Mammary epithelial cell (primary cell): ENCODE measurements at regions of chr15 and their contacts with region 1.

Region 1: DNA sequence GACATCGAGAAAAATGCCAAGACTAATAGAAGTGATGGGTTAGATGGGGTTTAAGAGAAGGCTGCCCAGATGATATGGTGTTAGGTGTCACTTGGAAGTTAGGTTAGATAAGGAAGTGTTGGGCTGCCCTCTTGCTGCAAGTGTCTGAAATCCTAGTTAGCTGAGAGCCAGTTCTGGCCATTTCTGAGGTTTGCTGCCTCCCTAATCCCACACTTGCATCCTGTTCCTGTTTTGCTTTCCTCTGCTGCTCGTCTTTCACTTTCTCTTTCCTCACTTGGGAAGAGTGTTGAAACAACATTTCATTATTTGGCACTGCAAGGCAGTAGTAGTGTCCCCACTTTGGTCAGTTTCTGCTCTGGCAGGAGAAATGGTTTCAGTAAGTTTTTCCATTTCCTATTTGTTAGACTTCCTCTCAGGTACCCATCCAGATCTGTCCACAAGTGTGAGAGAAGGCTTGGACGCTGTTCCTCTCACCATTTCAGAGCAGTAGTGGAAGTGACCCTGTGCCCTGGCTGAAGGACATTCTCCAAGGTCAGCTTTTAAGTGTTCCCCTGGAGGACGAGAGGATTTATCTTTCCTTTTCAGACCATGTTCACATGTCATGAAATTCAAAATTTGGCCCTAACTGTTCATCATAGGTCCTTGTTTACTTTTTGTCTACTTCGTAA is 93.3 kb downstream of the ADAMTSL3 start:
- DNase-seq: peak; percentile 65
- H3K4me3 ChIP-seq: peak overlapping the region in 1 of 3 experiments; percentile 18
- H3K27ac ChIP-seq: no peak overlapping the region
- H3K4me1 ChIP-seq: no peaks in the 10 kb centered on the region
- H3K27me3 ChIP-seq: no peaks in the 10 kb centered on the region
- CTCF ChIP-seq: peak; percentile 51 to 68

Region 2: GRCh38 chr15:83248151-83249029 is 498.8 kb before region 1 on chr15:
- CTCF ChIA-PET with region 1: no interaction called
- dilution Hi-C with region 1: no loop called
- in situ Hi-C with region 1: no loop called
- intact Hi-C with region 1: loop called (anchors 10 kb)
- DNase-seq: peak; percentile 62
- H3K4me3 ChIP-seq: no peak overlapping the region
- H3K27ac ChIP-seq: no peak overlapping the region
- H3K4me1 ChIP-seq: no peaks in the 10 kb centered on the region
- H3K27me3 ChIP-seq: no peaks in the 10 kb centered on the region
- CTCF ChIP-seq: peak; percentile 81 to 87

Region 3: DNA sequence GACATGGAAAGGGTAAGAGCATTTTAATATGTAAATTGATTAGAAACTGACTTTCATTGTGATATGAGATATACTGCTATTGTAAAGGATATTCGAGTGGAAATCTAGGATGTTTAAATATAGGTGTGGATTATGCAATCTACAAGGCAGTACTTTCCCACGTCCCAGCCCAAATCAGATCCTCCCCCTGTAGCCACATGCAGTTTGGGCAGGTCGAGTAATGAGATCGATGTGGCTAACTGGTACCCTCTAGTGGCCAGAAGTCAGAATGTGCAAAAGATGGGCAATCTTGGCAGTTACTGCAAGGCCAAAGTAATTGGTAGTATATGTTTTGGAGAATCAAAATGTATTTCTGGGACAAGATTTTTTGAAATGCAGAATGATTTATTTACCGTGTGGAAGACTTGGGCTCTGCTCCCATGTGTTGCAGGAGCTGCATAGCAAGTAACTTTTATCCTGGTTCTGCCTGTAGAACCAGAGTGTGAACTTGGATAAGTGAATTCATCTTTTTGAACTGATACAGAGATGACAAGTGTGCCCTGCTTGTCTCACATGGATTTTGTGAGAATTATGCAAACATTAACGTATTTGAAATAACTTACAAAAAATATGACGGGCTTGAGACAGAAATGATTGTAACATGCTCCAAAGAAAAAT is 187.7 kb before region 1 on chr15:
- CTCF ChIA-PET with region 1: no interaction called
- dilution Hi-C with region 1: no loop called
- in situ Hi-C with region 1: loop called in 1 of 2 experiments (anchors 10 kb)
- intact Hi-C with region 1: no loop called
- DNase-seq: peak; percentile 71
- H3K4me3 ChIP-seq: no peak overlapping the region
- H3K27ac ChIP-seq: no peak overlapping the region
- H3K4me1 ChIP-seq: peaks cover 6% of the 10 kb centered on the region
- H3K27me3 ChIP-seq: no peaks in the 10 kb centered on the region
- CTCF ChIP-seq: peak; percentile 86 to 89

Region 4: DNA sequence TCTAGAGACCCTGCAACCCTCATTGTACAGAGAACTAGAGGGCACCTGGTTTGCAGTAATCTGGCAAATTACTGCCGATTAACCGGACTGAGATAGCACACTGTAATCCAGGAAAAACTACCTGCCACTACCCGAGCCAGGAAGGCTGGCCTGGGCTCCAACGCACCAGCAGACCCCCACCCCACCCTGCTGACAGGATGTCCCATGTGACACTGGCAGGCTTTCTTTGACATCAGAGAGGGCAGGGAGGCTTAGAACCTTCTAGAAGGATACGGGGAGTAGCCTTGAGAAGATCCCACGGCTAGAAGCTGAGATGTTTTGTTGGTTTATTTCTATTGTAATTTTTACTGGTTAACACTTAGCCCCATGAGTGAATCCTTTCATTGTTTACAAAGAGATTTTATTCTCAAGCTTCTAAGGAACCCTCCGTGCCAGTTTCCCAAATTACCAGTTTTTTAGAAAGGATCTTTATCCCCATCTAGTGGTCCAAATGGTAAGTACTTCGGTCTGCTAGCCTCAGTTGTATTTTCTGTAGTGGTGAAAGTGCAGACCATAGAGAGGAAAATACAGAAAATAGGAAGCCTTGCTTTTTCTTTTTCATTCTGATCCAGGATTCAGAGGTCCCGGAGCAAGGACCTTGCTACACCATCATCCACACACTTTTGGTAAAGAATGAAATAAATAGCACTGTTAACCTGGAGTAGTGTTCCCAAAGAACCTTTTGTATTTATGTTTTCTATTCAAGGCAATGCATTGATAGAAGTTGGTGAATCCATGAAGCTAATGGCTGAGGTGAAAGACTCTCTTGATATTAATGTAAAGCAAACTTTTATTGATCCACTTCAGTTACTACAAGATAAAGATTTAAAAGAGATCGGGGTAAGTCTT is 175.1 kb before region 1 on chr15:
- CTCF ChIA-PET with region 1: no interaction called
- dilution Hi-C with region 1: no loop called
- in situ Hi-C with region 1: loop called in 1 of 2 experiments (anchors 10 kb)
- intact Hi-C with region 1: loop called (anchors 2 kb)
- DNase-seq: no peak
- H3K4me3 ChIP-seq: no peak overlapping the region
- H3K27ac ChIP-seq: no peak overlapping the region
- H3K4me1 ChIP-seq: no peaks in the 10 kb centered on the region
- H3K27me3 ChIP-seq: no peaks in the 10 kb centered on the region
- CTCF ChIP-seq: peak; percentile 62 to 70

Region 5: DNA sequence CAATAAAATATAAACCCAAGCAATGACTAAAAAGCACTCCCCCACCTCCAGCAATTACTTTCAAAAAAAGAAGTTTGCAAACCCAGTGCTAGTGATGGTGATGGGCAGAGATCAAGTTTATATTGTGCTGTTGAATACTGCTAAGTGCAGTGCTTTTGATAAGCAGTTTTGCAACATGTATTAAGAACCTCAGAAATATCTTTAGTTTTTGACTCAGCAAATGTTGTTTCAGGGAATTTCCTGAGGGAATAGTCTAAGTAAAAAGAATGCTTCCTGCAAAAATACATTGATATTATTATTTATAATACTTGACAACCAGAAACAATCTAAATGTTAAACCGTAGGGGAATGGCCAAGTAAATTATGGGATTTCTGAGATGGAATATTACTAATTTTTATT is 24.0 kb before region 1 on chr15:
- CTCF ChIA-PET with region 1: no interaction called
- dilution Hi-C with region 1: no loop called
- in situ Hi-C with region 1: no loop called
- intact Hi-C with region 1: no loop called
- DNase-seq: no peak
- H3K4me3 ChIP-seq: no peak overlapping the region
- H3K27ac ChIP-seq: no peak overlapping the region
- H3K4me1 ChIP-seq: no peaks in the 10 kb centered on the region
- H3K27me3 ChIP-seq: no peaks in the 10 kb centered on the region
- CTCF ChIP-seq: no peak

Region 6: GRCh38 chr15:84023636-84024035 is 276.5 kb after region 1 on chr15:
- CTCF ChIA-PET with region 1: no interaction called
- dilution Hi-C with region 1: no loop called
- in situ Hi-C with region 1: no loop called
- intact Hi-C with region 1: loop called (anchors 2 kb)
- DNase-seq: peak; percentile 32
- H3K4me3 ChIP-seq: no peak overlapping the region
- H3K27ac ChIP-seq: no peak overlapping the region
- H3K4me1 ChIP-seq: no peaks in the 10 kb centered on the region
- H3K27me3 ChIP-seq: no peaks in the 10 kb centered on the region
- CTCF ChIP-seq: peak; percentile 63 to 76